HEK293 (cell line): ENCODE measurements at regions of chr7 and their contacts with region 1.

Region 1: DNA sequence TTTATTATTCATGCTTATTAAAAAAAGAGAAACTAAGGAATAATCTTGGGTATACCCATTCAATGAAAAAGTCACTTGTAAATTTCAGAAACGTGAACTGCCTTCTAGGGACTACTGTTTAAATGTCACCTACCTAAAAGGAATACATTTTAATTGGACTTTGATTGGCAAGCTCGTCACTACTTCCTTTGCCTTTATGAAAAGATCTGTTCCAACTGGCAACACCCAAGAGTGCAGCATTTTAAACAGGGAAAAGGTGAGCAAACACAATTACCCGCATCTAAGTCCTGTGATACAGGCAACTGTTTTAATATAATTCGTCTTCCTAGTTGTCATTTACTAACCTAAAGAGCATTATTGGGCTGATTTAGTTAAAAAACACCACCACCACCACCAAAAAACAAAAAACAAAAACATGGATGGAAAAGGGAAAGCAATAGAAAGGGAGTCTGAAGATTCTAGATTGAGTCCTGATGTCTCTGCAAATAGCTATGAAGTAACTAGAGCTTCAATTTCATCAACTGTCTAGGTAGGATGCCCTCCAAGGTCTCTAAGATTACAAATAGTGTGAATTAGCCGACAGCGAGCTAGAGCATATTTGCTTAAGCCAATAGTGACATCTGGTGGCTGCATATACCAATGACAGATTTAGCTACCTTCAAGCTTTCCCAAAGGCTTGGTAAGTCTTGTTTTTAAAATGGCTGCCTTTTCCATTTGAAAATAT is 33.8 kb upstream of the ICA1 start:
- H3K4me3 ChIP-seq: no peak overlapping the region
- H3K27ac ChIP-seq: no peak overlapping the region
- H3K4me1 ChIP-seq: peaks cover 8% of the 10 kb centered on the region
- CTCF ChIP-seq: 0 out of 2 replicates have a peak, but pooled peaks have one; percentile 35

Region 2: DNA sequence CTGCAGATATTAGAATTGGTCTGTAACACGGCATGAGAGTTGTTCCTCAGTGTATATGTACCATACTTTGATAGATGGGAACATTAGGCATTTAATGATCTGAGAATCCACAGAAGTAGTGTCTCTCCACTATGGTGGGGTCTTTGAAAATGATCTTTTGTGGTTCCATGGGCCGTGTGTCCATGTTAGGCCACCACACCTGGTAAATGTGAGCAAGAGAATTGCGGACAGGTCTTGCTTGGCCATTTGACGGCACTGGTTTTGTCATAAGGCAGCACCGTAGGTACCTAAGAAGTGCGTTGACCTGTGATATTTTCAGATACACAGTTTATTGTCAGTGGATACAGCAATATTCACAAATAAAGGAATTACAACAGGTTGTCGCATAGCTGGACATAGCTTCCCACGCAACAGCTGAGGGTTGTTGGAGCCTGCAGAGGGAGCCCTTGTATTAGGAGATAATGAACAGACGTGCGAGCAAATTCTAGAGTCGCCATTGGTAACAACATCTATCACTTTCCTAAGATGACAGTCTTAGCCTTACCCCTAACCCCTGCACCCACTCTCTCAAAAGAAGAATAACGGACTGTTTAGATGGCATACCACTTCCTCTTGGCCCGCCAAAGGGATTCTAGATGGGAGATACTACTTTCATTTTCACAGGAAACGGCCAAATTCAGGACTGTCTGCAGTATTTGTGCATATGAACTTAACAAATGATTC is 871.5 kb before region 1 on chr7:
- CTCF ChIA-PET with region 1: interaction called, 23 read pairs
- POLR2A ChIA-PET with region 1: no interaction called
- H3K4me3 ChIP-seq: no peak overlapping the region
- H3K27ac ChIP-seq: no peak overlapping the region
- H3K4me1 ChIP-seq: no peaks in the 10 kb centered on the region; the same call in 1 of the 2 replicates
- CTCF ChIP-seq: peak; percentile 63

Region 3: GRCh38 chr7:7595451-7595850 is 700.3 kb before region 1 on chr7:
- CTCF ChIA-PET with region 1: interaction called, 16 read pairs
- POLR2A ChIA-PET with region 1: no interaction called
- H3K4me3 ChIP-seq: no peak overlapping the region
- H3K27ac ChIP-seq: no peak overlapping the region
- H3K4me1 ChIP-seq: no peaks in the 10 kb centered on the region
- CTCF ChIP-seq: no peak

Region 4: DNA sequence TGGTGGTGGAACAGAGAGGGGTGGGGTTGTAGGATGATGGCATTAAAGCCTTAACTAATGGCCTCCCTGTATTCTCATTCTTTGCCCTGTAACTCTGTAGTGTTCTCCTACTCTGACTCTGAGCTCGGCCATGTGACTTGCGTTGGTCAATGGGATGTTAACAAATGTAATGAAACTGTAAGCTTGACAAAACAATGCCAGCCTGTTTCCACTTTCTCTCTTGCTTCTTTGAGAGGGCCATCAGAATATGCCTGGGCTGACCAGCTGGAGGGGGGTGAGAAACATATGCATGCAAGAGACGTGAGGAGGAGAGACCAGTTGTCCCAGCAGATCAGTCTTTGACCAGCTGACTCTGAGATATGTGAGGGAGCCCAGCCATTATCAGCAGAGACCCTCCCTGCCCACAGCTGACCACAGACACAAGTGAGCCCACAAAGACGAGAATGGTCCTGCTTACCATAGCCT is 134.4 kb before region 1 on chr7:
- CTCF ChIA-PET with region 1: no interaction called
- POLR2A ChIA-PET with region 1: no interaction called
- H3K4me3 ChIP-seq: no peak overlapping the region
- H3K27ac ChIP-seq: no peak overlapping the region
- H3K4me1 ChIP-seq: no peaks in the 10 kb centered on the region
- CTCF ChIP-seq: no peak

Region 5: GRCh38 chr7:8217200-8218068 is 78.4 kb before region 1 on chr7:
- CTCF ChIA-PET with region 1: interaction called, 13 read pairs
- POLR2A ChIA-PET with region 1: no interaction called
- H3K4me3 ChIP-seq: no peak overlapping the region
- H3K27ac ChIP-seq: no peak overlapping the region
- H3K4me1 ChIP-seq: no peaks in the 10 kb centered on the region
- CTCF ChIP-seq: peak; percentile 35; the same call in 1 of the 2 replicates

Region 6: DNA sequence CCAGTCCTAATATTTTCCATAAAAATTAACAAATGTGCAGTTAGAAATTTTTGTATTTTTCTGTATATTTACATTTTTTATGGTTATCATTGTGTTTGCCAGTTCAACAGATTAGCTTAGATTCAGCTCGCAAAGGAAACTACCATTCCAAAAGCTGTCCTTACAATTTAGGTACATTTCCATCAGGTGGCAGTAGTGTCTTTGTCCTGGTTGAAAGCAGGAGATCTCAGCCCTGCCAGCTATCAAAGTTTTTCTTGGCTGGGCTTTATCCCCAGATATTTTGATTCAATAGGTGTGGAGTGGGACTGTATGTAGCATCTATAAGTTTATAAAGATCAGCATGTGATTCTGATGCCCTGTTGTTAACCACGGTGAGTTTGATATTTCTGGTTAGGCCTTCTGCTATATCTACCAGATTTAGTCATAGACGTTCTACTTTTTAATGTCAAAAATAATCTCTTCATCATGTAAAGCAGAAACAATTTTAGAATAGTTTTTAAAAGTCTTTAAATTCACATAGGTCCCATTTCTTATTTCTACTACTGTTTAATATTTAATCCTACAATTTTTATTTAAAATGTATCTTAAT is 18.3 kb before region 1 on chr7:
- CTCF ChIA-PET with region 1: interaction called, 57 read pairs
- POLR2A ChIA-PET with region 1: interaction called, 3 read pairs
- H3K4me3 ChIP-seq: no peak overlapping the region
- H3K27ac ChIP-seq: no peak overlapping the region
- H3K4me1 ChIP-seq: no peaks in the 10 kb centered on the region
- CTCF ChIP-seq: no peak